ENCODE measurements at regions of chr14 and their contacts with region 1.

Region 1: DNA sequence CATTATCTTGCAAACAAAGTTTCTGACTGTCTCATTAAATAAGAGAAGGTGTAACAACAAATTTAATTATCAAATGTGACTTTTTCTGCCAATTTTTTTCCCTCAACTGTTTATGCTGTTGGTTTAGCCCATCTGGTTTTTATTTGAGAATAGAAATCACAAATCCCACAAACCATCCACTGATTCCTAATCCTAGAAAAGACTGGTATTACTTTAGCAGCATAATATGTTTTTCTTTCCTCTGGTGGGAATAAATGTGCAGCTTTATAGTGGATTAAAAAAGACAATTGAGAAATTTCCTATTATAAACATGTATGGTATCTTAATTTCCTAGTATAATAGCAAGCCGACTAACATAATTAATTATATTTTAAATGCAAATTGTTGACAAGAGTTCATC is 257.9 kb upstream of the FOXN3 start:
- DNase-seq: no peak
- ATAC-seq: no peak
- H3K4me3 ChIP-seq: no peak overlapping the region
- H3K27ac ChIP-seq: no peak overlapping the region
- H3K4me1 ChIP-seq: peaks cover 0 to 15% (median 7%) of the 10 kb centered on the region in 9 donors
- H3K27me3 ChIP-seq: no peaks in the 10 kb centered on the region
- CTCF ChIP-seq: no peak

Region 2: DNA sequence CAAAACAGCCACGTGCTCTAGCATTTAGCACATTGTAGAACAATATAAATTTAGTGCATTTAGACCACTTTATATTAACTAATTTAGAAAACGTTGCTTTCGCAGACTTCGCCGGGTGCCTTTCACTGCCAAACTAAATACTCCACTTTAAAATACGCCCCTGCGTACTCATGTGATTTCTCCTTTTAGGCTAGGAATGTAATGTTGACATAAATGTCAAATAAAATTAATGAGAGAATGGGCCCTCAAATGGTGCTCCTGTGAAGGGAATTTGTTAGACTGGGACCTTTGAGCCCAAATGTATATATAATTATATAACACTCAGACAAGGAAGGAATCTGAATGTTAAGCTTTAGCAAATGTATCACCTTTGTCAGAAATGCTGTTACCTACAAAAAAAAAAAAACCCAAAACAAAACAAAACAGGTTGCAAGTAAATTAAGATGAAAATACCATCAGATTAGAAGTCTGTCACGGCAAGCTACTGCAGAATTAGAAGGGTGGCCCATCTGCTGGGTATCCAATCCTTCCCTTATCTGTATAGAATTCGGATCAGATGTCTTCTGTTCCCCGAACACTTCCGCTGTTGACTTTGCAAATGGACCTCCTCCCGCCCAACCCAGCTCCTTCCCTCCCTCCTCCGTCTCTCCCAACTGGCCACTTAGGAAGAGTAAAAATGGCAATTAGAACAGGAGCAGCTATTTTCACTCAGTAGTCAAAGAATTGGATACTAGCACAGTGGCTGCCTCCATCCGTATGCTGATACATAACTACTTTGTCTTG is 98.6 kb before region 1 on chr14:
- intact Hi-C with region 1: no loop called
- DNase-seq: no peak
- ATAC-seq: no peak
- H3K4me3 ChIP-seq: no peak overlapping the region
- H3K27ac ChIP-seq: peak overlapping the region in 1 of 10 donors; percentile 40
- H3K4me1 ChIP-seq: peaks cover 15 to 72% (median 48%) of the 10 kb centered on the region in 9 donors
- H3K27me3 ChIP-seq: no peaks in the 10 kb centered on the region
- CTCF ChIP-seq: no peak

Region 3: DNA sequence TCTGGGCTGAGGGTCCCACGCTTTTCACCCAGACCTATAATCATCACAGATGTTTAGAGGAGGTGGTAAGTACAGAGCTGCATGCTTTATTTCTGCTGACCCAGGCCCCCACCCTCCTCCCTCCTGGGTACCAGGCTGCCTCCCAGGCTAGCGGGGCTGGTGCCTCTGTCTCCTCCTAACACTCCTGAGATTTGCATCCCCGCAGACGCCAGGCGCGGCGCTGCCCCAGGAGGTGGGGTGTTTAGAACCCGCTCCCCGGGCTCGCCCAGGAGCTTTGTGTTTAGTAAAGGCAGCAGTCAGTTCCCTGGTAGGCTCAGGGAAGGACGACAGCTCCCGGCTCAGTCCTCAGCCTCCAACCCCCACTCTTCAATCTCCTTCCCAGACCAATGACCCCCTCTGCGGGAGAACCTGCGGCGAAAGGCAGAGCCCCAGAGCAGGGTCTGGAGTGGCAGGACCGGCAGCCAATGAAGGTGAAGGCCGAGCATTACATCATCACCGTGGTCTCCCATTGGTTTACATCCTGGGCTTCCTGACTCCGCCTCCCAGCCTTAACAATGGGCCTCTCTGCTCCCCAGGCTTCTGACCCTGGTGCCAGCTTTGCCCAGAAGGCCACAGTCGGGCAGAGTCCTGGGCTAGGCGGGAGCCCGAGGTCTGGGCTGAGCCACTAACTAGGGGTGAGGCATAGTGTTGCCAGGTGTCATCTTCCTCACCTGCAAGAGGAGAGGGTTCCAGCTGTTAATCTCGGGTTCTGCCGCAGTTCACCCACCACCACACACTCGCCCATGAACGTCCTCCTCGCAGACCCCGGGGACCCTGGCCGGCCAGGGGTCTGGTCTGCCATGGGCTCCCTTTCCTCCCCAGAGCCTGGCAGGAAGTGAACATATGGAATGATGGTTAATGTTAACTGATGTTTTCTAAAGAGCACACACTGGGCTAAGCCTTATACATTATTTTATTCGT is 779.4 kb after region 1 on chr14:
- intact Hi-C with region 1: loop called in 1 of 10 experiments (anchors 5 kb)
- DNase-seq: peak; percentile 80 to 89
- ATAC-seq: peak; percentile 86 to 96 (median 94)
- H3K4me3 ChIP-seq: peak overlapping the region in 8 of 10 donors; percentile 10 to 50 (median 44)
- H3K27ac ChIP-seq: peak overlapping the region in 9 of 10 donors; percentile 34 to 81 (median 71)
- H3K4me1 ChIP-seq: peaks cover 0 to 33% (median 21%) of the 10 kb centered on the region in 9 donors
- H3K27me3 ChIP-seq: no peaks in the 10 kb centered on the region
- CTCF ChIP-seq: peak in 3 of 9 donors; percentile 24 to 38 (median 35)

Measured in heart right ventricle (tissue), 16 donors.